CD4-positive, alpha-beta memory T cell (primary cell): ENCODE measurements at regions of chr19 and their contacts with region 1.

Region 1: GRCh38 chr19:45717166-45717982 is 13.3 kb downstream of the FBXO46 start:
- DNase-seq: peak; percentile 97 to 99 (median 98)
- H3K4me3 ChIP-seq: peak overlapping the region; percentile 72 to 90
- H3K4me3 Mint-ChIP-seq: peak overlapping the region; percentile 92 to 99 (median 97)
- H3K27ac ChIP-seq: peak overlapping the region; percentile 86
- H3K27ac Mint-ChIP-seq: peak overlapping the region; percentile 84 to 99 (median 98)
- H3K4me1 ChIP-seq: peaks cover 38% of the 10 kb centered on the region
- H3K4me1 Mint-ChIP-seq: peaks cover 32 to 59% (median 39%) of the 10 kb centered on the region in 4 donors
- H3K27me3 ChIP-seq: no peaks in the 10 kb centered on the region
- H3K27me3 Mint-ChIP-seq: no peaks in the 10 kb centered on the region

Region 2: DNA sequence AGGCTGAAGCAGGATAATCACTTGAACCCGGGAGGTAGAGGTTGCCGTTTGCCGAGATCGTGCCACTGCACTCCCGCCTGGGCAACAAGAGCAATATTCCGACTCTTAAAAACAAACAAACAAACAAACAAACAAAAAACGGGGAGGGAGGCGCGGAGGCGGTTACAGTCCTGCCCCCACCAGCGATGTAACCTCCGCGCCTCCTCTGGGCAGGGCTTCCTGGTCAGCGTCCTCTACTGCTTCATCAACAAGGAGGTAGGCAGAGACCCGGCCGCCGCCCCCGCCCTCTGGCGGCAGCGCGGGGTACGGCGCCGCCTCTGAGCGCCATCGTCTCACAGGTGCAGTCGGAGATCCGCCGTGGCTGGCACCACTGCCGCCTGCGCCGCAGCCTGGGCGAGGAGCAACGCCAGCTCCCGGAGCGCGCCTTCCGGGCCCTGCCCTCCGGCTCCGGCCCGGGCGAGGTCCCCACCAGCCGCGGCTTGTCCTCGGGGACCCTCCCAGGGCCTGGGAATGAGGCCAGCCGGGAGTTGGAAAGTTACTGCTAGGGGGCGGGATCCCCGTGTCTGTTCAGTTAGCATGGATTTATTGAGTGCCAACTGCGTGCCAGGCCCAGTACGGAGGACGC is 35.9 kb before region 1 on chr19:
- CTCF ChIA-PET with region 1: interaction called, 8 read pairs
- POLR2A ChIA-PET with region 1: interaction called, 14 read pairs
- intact Hi-C with region 1: loop called (anchors 5 kb)
- DNase-seq: peak; percentile 78 to 89 (median 85)
- H3K4me3 ChIP-seq: peak overlapping the region in 1 of 2 donors; percentile 42
- H3K4me3 Mint-ChIP-seq: peak overlapping the region; percentile 78 to 88 (median 86)
- H3K27ac ChIP-seq: peak overlapping the region; percentile 35
- H3K27ac Mint-ChIP-seq: peak overlapping the region; percentile 57 to 92 (median 78)
- H3K4me1 ChIP-seq: peaks cover 24% of the 10 kb centered on the region
- H3K4me1 Mint-ChIP-seq: peaks cover 11 to 30% (median 20%) of the 10 kb centered on the region in 4 donors
- H3K27me3 ChIP-seq: no peaks in the 10 kb centered on the region
- H3K27me3 Mint-ChIP-seq: peaks cover 0 to 5% of the 10 kb centered on the region in 2 donors

Region 3: DNA sequence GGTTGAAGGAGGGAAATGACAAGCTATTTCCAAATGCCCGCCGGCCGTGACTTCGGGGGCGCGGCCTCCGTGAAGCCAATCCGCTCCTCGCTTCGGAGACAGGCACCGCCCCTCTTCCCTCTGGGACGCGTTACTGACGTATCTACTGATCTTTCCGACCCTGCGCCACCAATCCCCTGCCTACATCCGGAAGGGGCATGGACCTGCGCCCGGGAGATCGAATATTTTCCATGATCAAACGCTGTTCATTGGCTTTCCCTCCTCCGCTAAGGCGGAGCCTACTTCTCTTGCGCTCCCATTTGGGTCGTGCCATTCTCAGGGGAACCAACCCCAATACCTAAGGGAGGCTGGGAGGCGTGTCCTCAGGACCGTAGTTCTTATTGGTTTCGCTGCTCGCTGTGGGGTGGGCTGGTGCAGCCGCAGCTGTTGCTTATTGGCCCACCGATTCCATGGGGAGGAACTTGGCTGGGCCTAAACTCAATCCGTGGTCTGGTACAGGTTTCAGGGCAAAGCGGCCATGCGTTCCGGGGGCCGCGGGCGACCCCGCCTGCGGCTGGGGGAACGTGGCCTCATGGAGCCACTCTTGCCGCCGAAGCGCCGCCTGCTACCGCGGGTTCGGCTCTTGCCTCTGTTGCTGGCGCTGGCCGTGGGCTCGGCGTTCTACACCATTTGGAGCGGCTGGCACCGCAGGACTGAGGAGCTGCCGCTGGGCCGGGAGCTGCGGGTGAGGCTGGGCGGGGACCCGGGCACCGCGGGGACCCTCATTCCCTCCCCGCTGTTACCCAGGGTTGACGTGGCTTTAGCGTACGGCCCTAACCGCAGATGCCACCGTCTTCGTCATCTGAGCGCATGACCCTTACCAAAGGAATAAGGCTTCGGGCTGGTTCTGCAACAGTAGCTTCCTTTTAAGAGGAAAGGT is 24.9 kb before region 1 on chr19 and contains the start of gene QPCTL:
- CTCF ChIA-PET with region 1: interaction called, 48 read pairs
- POLR2A ChIA-PET with region 1: interaction called, 60 read pairs
- intact Hi-C with region 1: loop called (anchors 1 kb)
- DNase-seq: peak; percentile 98 to 99 (median 98)
- H3K4me3 ChIP-seq: peak within 1 kb of the TSS; percentile 70 to 94
- H3K4me3 Mint-ChIP-seq: peak within 1 kb of the TSS; percentile 90 to 100 (median 94)
- H3K27ac ChIP-seq: peak within 1 kb of the TSS; percentile 88
- H3K27ac Mint-ChIP-seq: peak within 1 kb of the TSS; percentile 91 to 100 (median 97)
- H3K4me1 ChIP-seq: peaks cover 17% of the 10 kb centered on the region
- H3K4me1 Mint-ChIP-seq: peaks cover 11 to 35% (median 17%) of the 10 kb centered on the region in 4 donors
- H3K27me3 ChIP-seq: no peaks in the 10 kb centered on the region
- H3K27me3 Mint-ChIP-seq: no peaks in the 10 kb centered on the region
- total RNA-seq, gene QPCTL: 10.8 to 11.4 TPM

Region 4: DNA sequence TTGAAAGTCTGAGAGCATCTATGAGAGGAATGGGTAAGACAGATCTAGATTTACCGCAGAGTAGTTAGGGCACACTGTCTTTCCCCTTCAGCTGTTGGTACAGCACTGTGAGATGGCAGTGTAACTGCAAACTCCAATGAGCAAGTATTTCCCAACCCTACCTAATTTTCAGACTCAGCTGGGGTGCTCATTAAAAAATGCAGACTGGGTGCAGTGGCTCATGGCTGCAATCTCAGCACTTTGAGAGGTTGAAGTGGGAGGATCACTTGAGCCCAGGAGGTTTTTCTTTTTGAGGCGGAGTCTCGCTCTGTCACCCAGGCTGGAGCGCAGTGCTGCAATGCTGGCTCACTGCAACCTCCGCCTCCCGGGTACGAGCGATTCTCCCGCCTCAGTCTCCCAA is 12.3 kb before region 1 on chr19:
- CTCF ChIA-PET with region 1: no interaction called
- POLR2A ChIA-PET with region 1: interaction called, 18 read pairs
- intact Hi-C with region 1: no loop called
- DNase-seq: no peak
- H3K4me3 ChIP-seq: no peak overlapping the region
- H3K4me3 Mint-ChIP-seq: no peak overlapping the region
- H3K27ac ChIP-seq: no peak overlapping the region
- H3K27ac Mint-ChIP-seq: no peak overlapping the region
- H3K4me1 ChIP-seq: no peaks in the 10 kb centered on the region
- H3K4me1 Mint-ChIP-seq: peaks cover 0 to 5% (median 2%) of the 10 kb centered on the region in 4 donors
- H3K27me3 ChIP-seq: no peaks in the 10 kb centered on the region
- H3K27me3 Mint-ChIP-seq: no peaks in the 10 kb centered on the region

Region 5: GRCh38 chr19:45730389-45731288 is 13.3 kb after region 1 on chr19 and contains the start of gene FBXO46:
- CTCF ChIA-PET with region 1: interaction called, 10 read pairs
- POLR2A ChIA-PET with region 1: interaction called, 55 read pairs
- intact Hi-C with region 1: loop called (anchors 1 kb)
- DNase-seq: peak; percentile 90 to 97 (median 92)
- H3K4me3 ChIP-seq: peak within 1 kb of the TSS; percentile 68 to 97
- H3K4me3 Mint-ChIP-seq: peak within 1 kb of the TSS; percentile 89 to 100 (median 93)
- H3K27ac ChIP-seq: peak within 1 kb of the TSS; percentile 89
- H3K27ac Mint-ChIP-seq: peak within 1 kb of the TSS; percentile 83 to 96 (median 94)
- H3K4me1 ChIP-seq: peaks cover 35% of the 10 kb centered on the region
- H3K4me1 Mint-ChIP-seq: peaks cover 16 to 51% (median 30%) of the 10 kb centered on the region in 4 donors
- H3K27me3 ChIP-seq: no peaks in the 10 kb centered on the region
- H3K27me3 Mint-ChIP-seq: no peaks in the 10 kb centered on the region
- total RNA-seq, gene FBXO46: 33.1 to 37.3 TPM

Region 6: GRCh38 chr19:45792470-45793177 is 75.2 kb after region 1 on chr19 and contains the start of gene DMWD:
- CTCF ChIA-PET with region 1: interaction called, 3 read pairs
- POLR2A ChIA-PET with region 1: interaction called, 3 read pairs
- intact Hi-C with region 1: loop called (anchors 2 kb)
- DNase-seq: peak; percentile 97 to 99 (median 98)
- H3K4me3 ChIP-seq: peak within 1 kb of the TSS; percentile 33 to 62
- H3K4me3 Mint-ChIP-seq: peak within 1 kb of the TSS; percentile 82 to 92 (median 89)
- H3K27ac ChIP-seq: no peak within 1 kb of the TSS
- H3K27ac Mint-ChIP-seq: peak within 1 kb of the TSS; percentile 79 to 96 (median 91)
- H3K4me1 ChIP-seq: peaks cover 32% of the 10 kb centered on the region
- H3K4me1 Mint-ChIP-seq: peaks cover 31 to 46% (median 36%) of the 10 kb centered on the region in 4 donors
- H3K27me3 ChIP-seq: peaks cover 4% of the 10 kb centered on the region
- H3K27me3 Mint-ChIP-seq: peaks cover 8 to 20% of the 10 kb centered on the region in 2 donors
- total RNA-seq, gene DMWD: 49.3 to 52.6 TPM